ENCODE measurements at regions of chr10 and their contacts with region 1.

Region 1: DNA sequence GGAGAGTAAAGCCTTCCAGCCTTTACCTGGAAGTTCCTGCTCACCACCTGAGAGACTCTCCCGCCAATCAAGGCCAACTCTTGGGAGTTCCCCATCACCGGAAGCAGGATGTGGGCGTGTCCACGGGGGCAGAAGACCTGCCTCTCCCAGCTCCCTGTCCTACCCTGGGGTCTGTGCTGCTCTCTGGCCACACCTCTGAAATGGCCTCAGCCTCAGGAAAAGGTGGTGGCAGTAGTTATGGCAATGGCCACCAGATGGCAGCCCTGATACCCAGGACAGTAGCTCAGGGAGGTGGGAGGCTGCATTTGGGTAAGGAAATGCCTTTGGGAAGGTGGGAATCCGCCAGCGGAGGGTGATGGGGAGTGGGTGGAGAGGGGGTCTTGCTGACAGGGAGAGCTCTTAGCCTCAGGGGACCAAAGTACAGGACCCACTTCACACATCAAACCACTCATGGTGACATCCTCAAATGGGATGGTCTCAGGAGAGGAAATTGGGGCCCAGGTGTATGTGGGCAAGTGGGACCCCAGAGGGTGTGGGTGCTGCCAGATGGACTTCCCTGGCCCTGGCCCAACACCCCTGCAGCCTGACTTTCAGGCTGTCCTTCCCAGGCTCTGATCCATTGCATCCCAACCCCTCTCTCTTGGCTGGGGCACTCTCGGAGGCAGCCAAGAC is 33.9 kb downstream of the KAZALD1 start:
- DNase-seq: peak; percentile 52
- ATAC-seq: peak; percentile 99
- H3K4me3 ChIP-seq: no peak overlapping the region
- H3K27ac ChIP-seq: no peak overlapping the region
- H3K4me1 ChIP-seq: no peaks in the 10 kb centered on the region
- H3K27me3 ChIP-seq: peaks cover 0 to 1% of the 10 kb centered on the region in 2 experiments; a peak in 3 of 4 replicates
- CTCF ChIP-seq: peak; percentile 80 to 91 (median 91)
- EP300 ChIP-seq: no peak
- POLR2A ChIP-seq: no peak
- RAD21 ChIP-seq: peak; percentile 59

Region 2: DNA sequence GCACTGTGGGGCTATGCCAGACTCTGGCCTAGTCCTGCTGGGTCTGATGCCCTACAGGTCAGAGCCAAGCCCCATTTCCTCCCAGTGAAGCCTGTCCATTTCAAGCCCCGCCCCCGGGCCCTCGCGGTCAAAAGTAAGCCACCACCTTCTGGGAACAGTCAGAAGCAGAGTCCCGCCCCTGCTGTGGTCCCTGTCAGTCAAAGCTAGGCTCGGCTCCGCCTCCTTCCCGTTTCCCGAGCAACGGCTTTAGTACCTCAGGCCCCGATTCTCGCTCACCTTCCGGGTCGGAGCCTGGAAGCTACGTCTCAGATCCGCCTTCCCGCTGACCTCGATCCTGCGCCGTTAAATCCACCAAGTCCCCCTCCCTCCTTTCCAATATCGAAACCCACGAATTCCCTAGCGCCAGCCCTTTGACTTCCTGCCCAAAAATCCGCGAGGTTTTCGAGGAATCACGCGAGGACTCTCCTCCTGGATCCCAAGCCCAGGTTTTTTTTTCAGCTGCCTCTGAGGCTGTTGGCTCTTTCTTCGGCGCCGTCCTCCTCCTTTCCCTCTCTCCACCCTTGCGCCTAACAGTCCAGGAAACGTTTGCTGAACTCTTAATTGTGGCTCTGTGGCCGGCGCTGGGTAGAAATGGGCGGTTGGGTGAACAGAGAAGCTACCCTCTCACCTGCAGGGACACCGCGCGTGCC is 52.9 kb before region 1 on chr10:
- CTCF ChIA-PET with region 1: interaction called, 18 read pairs
- POLR2A ChIA-PET with region 1: no interaction called
- RAD21 ChIA-PET with region 1: interaction called, 5 read pairs
- SMC1A ChIA-PET with region 1: interaction called, 7 read pairs
- in situ Hi-C with region 1: no loop called
- intact Hi-C with region 1: no loop called
- DNase-seq: peak; percentile 83
- ATAC-seq: peak; percentile 96
- H3K4me3 ChIP-seq: peak overlapping the region; percentile 63
- H3K27ac ChIP-seq: peak overlapping the region; percentile 7; the same call in 1 of the 2 replicates
- H3K4me1 ChIP-seq: peaks cover 5% of the 10 kb centered on the region; the same call in 1 of the 2 replicates
- H3K27me3 ChIP-seq: no peaks in the 10 kb centered on the region; a peak in 1 of 4 replicates
- CTCF ChIP-seq: no peak
- EP300 ChIP-seq: no peak
- POLR2A ChIP-seq: peak; percentile 87
- RAD21 ChIP-seq: no peak

Region 3: DNA sequence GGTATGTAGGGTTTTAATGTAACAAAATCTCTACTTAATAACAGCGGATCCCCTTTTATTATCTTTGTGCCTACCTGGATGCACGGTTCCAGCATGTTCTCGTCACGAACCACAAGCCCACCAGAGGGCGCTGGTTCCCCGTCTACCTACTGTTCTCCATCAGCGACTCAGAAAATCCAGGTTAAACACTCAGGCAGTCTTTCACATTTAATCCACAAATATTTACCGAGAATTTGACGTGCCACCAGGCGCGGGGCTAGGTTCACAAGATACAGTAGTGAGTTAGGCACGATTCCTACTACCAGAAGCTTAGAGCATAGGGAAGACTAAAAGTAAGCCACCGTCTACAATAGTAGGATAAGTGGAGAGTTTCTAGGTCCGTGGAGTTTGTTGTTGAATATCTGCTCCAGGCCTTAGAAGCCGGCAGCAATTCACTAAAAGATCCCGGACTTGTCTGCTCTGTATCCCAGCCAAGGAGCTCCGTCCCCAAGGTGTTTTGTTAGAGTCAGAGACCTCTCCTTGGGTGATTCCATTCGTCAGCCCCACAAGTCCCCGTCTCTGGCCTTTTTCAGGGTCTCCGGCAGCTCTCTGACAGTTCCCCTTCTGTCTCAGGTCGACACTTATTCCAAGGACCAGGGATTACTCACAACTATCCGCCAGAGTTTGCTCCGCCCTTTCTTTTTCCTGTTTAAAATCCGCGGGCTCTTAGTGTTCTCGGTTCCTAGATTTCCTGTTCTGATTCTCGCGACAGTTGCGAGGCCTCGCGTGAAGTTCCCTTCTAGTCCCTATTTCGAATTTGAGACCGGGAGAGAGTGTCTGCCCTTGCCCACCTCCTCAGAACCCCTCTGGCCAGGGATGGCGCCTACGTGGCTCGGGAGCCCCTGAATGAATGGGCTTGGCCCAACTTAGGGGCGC is 35.4 kb before region 1 on chr10:
- CTCF ChIA-PET with region 1: interaction called, 19 read pairs
- POLR2A ChIA-PET with region 1: interaction called, 4 read pairs
- RAD21 ChIA-PET with region 1: interaction called, 6 read pairs
- SMC1A ChIA-PET with region 1: interaction called, 11 read pairs
- in situ Hi-C with region 1: no loop called
- intact Hi-C with region 1: no loop called
- DNase-seq: peak; percentile 81
- ATAC-seq: peak; percentile 54
- H3K4me3 ChIP-seq: peak overlapping the region; percentile 95
- H3K27ac ChIP-seq: peak overlapping the region; percentile 98
- H3K4me1 ChIP-seq: peaks cover 31% of the 10 kb centered on the region
- H3K27me3 ChIP-seq: peaks cover 0 to 3% of the 10 kb centered on the region in 2 experiments; a peak in 1 of 4 replicates
- CTCF ChIP-seq: peak; percentile 87 to 92 (median 92)
- EP300 ChIP-seq: no peak
- POLR2A ChIP-seq: no peak; the same call in 1 of the 2 replicates
- RAD21 ChIP-seq: peak; percentile 83

Region 4: DNA sequence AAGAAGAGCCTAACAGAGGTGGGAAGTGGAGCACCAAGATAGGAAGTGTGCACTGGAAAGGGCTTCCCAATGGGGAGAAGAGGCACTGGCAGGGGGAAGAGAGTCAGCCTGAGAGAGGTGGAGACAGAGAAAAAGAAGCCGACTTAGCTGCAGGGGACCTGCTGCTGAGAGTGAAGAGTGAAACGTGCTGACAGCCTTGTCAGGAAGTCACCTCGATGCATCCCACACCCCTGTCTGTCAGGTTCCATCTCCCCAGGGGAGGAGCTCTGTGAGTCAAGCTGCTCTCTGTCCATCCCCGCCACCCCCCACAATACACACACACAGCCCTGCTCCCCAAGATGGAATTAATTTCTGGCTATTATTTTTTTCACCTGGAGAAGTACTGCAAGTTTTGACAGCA is 19.9 kb before region 1 on chr10:
- CTCF ChIA-PET with region 1: interaction called, 17 read pairs
- POLR2A ChIA-PET with region 1: no interaction called
- RAD21 ChIA-PET with region 1: interaction called, 5 read pairs
- SMC1A ChIA-PET with region 1: interaction called, 5 read pairs
- in situ Hi-C with region 1: no loop called
- intact Hi-C with region 1: no loop called
- DNase-seq: no peak
- ATAC-seq: no peak
- H3K4me3 ChIP-seq: no peak overlapping the region
- H3K27ac ChIP-seq: no peak overlapping the region
- H3K4me1 ChIP-seq: peaks cover 15% of the 10 kb centered on the region
- H3K27me3 ChIP-seq: peaks cover 0 to 4% of the 10 kb centered on the region in 2 experiments; a peak in 3 of 4 replicates
- CTCF ChIP-seq: no peak
- EP300 ChIP-seq: no peak
- POLR2A ChIP-seq: no peak
- RAD21 ChIP-seq: no peak

Region 5: DNA sequence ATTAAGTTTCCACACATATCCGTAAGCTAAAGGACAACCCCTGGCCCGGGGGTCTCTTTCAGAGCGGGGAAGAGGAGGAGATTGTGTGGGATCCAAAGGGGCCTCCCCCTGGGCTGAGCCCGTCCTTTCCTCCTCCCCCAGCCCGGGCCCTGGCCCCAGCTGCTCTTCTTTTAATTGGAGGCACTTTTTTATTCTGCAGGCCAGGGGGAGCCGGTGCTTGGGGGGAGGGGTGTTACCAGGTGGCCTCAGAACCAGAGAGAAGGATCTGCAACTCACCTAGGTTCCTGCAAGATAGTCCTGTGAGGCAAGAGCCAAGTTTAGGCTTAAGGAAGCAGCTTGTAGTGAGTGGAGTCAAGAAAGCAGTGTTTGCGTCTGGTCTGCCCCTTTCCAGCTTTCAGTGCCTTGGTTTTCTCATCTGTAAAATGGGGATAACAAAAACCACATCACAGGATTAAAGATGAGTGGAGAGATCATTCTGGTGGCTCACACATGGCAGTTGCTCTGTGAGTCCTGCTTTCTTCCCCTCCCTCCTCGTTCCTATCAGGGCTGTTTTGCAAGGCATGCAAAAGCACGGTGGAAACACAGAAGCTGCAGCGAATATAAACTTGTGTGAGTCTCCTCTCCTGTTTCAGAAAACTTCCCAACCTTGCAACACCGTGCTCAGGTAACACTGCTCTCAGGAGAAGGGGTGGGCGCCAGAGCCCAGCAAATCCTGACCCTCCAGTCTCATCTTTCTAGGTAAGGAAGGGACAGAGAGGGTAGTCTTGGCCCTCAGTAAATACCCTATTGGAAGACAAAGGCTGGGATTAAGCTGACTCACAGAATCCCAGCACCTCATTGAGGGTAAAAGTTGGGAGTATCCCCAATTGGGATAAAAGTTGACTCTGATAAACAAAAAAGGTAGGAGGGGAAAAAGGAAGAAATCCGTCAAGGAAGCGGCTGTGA is 31.3 kb after region 1 on chr10:
- CTCF ChIA-PET with region 1: interaction called, 13 read pairs
- POLR2A ChIA-PET with region 1: no interaction called
- RAD21 ChIA-PET with region 1: no interaction called
- SMC1A ChIA-PET with region 1: no interaction called
- in situ Hi-C with region 1: no loop called
- intact Hi-C with region 1: no loop called
- DNase-seq: no peak
- ATAC-seq: no peak
- H3K4me3 ChIP-seq: no peak overlapping the region
- H3K27ac ChIP-seq: no peak overlapping the region
- H3K4me1 ChIP-seq: no peaks in the 10 kb centered on the region
- H3K27me3 ChIP-seq: peaks cover 31 to 35% of the 10 kb centered on the region in 2 experiments
- CTCF ChIP-seq: no peak
- EP300 ChIP-seq: no peak
- POLR2A ChIP-seq: no peak
- RAD21 ChIP-seq: no peak